ENCODE measurements at regions of chr10 and their contacts with region 1.

Region 1: DNA sequence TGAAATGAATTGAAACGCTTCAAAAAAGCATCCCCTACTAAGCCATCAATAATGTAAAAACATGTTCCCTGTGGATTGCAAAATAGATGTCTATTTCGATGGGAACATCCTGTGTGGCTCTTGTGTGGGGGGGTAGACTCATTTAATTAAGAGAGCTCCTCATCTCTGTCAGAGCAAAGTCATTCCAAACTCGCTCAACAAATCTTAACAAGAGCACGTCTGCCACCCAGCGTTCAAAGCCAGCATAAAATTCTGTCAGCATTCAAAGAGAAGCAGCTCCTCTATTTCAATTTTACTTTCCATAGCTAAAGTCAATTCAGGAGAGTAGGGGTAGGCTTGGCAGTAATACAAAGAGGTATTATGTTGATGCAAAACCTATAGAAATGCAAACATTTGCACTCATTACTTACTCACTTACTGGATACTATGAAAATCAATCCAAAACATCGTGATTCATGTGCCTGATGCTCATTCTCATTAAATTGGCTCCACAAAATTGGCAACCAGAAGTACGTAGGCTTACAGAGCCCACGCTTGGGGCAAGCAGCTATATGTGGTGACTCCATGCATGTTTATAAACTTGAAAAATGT is 114.9 kb downstream of the IPMK start:
- DNase-seq: peak; percentile 41
- H3K4me3 ChIP-seq: no peak overlapping the region
- H3K27ac ChIP-seq: no peak overlapping the region
- H3K4me1 ChIP-seq: peaks cover 0 to 4% of the 10 kb centered on the region in 2 experiments; a peak in 1 of 4 replicates
- H3K27me3 ChIP-seq: no peaks in the 10 kb centered on the region
- CTCF ChIP-seq: peak; percentile 70
- EP300 ChIP-seq: no peak
- RAD21 ChIP-seq: peak; percentile 82

Region 2: GRCh38 chr10:57579926-57580325 is 572.8 kb before region 1 on chr10:
- CTCF ChIA-PET with region 1: interaction called, 11 read pairs
- POLR2A ChIA-PET with region 1: no interaction called
- DNase-seq: peak; percentile 10
- H3K4me3 ChIP-seq: no peak overlapping the region
- H3K27ac ChIP-seq: no peak overlapping the region
- H3K4me1 ChIP-seq: no peaks in the 10 kb centered on the region
- H3K27me3 ChIP-seq: no peaks in the 10 kb centered on the region
- CTCF ChIP-seq: peak; percentile 60
- EP300 ChIP-seq: no peak
- RAD21 ChIP-seq: peak; percentile 70

Region 3: GRCh38 chr10:58070956-58071355 is 81.8 kb before region 1 on chr10:
- CTCF ChIA-PET with region 1: interaction called, 10 read pairs
- POLR2A ChIA-PET with region 1: no interaction called
- DNase-seq: no peak
- H3K4me3 ChIP-seq: no peak overlapping the region
- H3K27ac ChIP-seq: no peak overlapping the region
- H3K4me1 ChIP-seq: no peaks in the 10 kb centered on the region
- H3K27me3 ChIP-seq: no peaks in the 10 kb centered on the region; the same call in 1 of the 2 replicates
- CTCF ChIP-seq: no peak
- EP300 ChIP-seq: no peak
- RAD21 ChIP-seq: no peak

Region 4: DNA sequence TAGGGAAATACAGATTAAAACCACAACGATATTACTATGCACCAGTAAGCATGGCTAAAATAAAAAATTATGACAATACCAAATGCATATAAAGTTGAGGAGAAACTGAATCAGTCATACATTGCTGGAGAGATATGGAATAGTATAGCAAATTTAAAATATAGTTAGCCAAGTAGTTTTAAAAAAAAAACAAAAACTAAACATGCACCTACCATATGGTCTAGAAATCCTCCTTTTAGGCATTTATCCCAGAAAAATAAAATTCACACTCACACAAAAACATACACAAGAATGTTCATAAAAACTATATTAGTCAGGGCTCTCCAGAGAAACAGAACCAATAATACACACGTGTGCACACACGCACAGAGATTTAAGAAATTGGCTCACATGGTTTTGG is 60.9 kb before region 1 on chr10:
- CTCF ChIA-PET with region 1: no interaction called
- POLR2A ChIA-PET with region 1: no interaction called
- DNase-seq: no peak
- H3K4me3 ChIP-seq: no peak overlapping the region
- H3K27ac ChIP-seq: no peak overlapping the region
- H3K4me1 ChIP-seq: no peaks in the 10 kb centered on the region
- H3K27me3 ChIP-seq: no peaks in the 10 kb centered on the region; the same call in 1 of the 2 replicates
- CTCF ChIP-seq: no peak
- EP300 ChIP-seq: no peak
- RAD21 ChIP-seq: no peak

Region 5: DNA sequence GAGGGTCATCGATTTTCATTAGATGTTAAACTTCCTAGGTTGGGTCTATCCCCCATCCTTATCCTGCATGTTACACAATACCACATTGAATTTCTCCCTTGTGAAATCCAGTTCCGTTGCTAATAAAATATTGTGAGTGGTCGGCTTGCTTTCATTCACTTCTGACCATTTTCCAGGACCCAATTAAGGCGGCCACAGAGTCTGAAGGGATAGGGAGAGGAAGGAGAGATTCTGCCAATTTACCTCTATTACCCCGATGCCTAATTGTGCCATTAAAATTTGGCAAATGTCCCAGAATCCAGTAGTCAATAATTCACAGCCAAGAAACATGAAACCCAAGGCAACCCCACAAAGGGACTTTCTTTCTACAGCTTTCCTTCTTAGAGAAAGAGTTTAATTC is 15.0 kb before region 1 on chr10:
- CTCF ChIA-PET with region 1: interaction called, 22 read pairs
- POLR2A ChIA-PET with region 1: no interaction called
- DNase-seq: peak; percentile 13
- H3K4me3 ChIP-seq: no peak overlapping the region
- H3K27ac ChIP-seq: no peak overlapping the region
- H3K4me1 ChIP-seq: no peaks in the 10 kb centered on the region; a peak in 2 of 4 replicates
- H3K27me3 ChIP-seq: no peaks in the 10 kb centered on the region; the same call in 1 of the 2 replicates
- CTCF ChIP-seq: no peak
- EP300 ChIP-seq: no peak
- RAD21 ChIP-seq: no peak